Activated CD4-positive, alpha-beta memory T cell treated with anti-CD3 and anti-CD28 coated beads for 36 hours (primary cell): ENCODE measurements at regions of chr6 and their contacts with region 1.

Region 1: DNA sequence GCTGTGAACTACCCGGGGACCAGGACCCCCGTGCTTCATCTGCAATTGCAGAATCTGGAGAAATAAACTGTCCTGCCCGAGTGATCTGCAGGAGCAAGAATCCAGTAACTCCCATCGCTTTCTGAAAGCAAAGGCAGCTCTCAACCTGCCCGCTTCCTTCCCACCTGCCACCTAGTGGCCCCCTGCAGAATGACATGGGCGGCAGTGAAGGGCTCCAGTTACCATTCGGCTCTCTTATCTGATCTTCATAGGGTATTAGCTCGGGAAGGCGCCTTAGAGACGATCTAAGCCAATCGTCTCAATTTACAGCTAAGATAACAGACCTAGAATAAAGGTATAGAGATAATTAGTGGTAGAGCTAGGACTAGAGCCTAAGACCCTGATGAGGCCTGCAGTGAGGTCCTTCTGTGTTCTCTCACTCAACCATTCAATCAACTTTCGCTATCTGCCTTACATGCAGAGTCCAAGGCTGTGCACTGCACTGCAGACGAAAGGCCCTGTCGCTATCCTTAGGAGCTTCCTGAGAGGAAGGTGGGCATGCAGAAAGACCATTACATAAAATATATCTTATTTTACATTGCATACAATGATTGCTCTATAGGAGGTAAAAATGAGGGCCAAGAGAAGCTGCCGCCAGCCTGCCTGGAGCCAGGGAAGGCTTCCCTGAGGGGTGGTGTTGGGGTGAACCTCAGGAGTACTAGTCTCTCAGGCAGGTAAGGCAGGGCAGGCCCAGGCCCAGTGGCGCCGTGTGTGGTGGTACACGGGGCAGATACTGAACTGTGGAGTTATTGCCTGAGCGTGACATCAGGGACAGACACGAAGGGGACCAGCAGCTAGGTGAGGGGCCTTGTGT is 7.1 kb upstream of the PSMG4 start:
- DNase-seq: peak; percentile 87
- H3K4me3 Mint-ChIP-seq: no peak overlapping the region
- H3K27ac Mint-ChIP-seq: no peak overlapping the region
- H3K4me1 Mint-ChIP-seq: peaks cover 4% of the 10 kb centered on the region
- H3K27me3 Mint-ChIP-seq: peaks cover 24% of the 10 kb centered on the region

Region 2: GRCh38 chr6:3125815-3126214 is 125.9 kb before region 1 on chr6:
- CTCF ChIA-PET with region 1: interaction called, 122 read pairs
- POLR2A ChIA-PET with region 1: no interaction called
- intact Hi-C with region 1: loop called (anchors 1 kb)
- DNase-seq: no peak
- H3K4me3 Mint-ChIP-seq: no peak overlapping the region
- H3K27ac Mint-ChIP-seq: no peak overlapping the region
- H3K4me1 Mint-ChIP-seq: peaks cover 7% of the 10 kb centered on the region
- H3K27me3 Mint-ChIP-seq: no peaks in the 10 kb centered on the region

Region 3: GRCh38 chr6:3209114-3210023 is 42.3 kb before region 1 on chr6:
- CTCF ChIA-PET with region 1: interaction called, 13 read pairs
- POLR2A ChIA-PET with region 1: no interaction called
- intact Hi-C with region 1: loop called (anchors 2 kb)
- DNase-seq: peak; percentile 84
- H3K4me3 Mint-ChIP-seq: peak overlapping the region; percentile 51
- H3K27ac Mint-ChIP-seq: peak overlapping the region; percentile 89
- H3K4me1 Mint-ChIP-seq: peaks cover 30% of the 10 kb centered on the region
- H3K27me3 Mint-ChIP-seq: peaks cover 20% of the 10 kb centered on the region

Region 4: DNA sequence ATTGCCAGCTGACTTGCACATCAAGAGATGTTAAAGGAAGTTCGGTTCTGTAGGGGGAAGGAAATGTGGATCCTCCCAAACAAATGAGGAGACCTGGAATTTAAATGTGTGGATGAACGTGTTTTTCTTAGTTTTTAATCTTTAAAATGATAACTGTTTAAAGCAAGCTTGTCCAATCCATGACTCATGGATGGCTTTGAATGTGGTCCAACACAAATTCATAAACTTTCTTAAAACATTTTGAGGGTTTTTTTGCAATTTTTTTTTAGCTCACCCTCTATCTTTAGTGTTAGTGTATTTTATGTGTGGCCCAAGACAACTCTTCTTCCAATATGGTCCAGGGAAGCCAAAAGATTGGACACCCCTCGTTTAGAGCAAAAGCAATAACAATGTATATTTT is 36.8 kb before region 1 on chr6:
- CTCF ChIA-PET with region 1: interaction called, 13 read pairs
- POLR2A ChIA-PET with region 1: no interaction called
- intact Hi-C with region 1: no loop called
- DNase-seq: no peak
- H3K4me3 Mint-ChIP-seq: no peak overlapping the region
- H3K27ac Mint-ChIP-seq: no peak overlapping the region
- H3K4me1 Mint-ChIP-seq: peaks cover 5% of the 10 kb centered on the region
- H3K27me3 Mint-ChIP-seq: peaks cover 28% of the 10 kb centered on the region

Region 5: DNA sequence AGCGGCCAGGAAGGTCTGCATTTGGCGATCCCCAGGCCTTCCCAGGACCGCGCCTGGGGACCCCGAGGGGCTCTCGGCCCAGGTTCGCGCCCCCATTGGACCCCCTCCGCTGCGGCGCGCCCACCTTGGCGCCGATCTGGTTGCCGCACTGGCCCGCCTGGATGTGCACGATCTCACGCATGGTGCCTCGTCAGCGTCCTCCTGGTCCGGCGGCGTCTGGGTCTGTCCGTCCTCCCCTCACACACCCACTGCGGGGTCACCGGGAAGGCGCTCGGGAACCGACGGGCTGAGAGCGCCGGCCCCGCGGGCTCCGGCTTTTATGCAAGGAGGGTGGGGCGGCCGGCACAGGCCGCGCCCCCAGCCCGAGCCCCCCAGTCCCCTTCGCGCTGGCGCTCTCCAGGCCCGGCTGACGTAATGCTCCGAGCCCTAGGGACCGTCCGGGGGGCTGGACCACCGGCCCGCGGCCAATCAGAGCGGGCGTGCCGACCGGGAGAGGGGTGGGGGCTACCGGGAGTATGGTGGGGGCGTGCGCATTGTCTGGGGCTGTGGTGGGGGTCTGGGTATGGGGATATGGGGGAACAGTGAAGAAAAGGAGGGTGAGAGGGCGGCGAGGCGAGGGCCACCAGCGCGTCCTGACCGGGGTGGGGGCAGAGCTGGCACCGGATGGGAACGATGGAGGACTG is 24.2 kb before region 1 on chr6 and contains the start of gene TUBB2B:
- CTCF ChIA-PET with region 1: interaction called, 9 read pairs
- POLR2A ChIA-PET with region 1: no interaction called
- intact Hi-C with region 1: loop called (anchors 2 kb)
- DNase-seq: no peak
- H3K4me3 Mint-ChIP-seq: peak within 1 kb of the TSS; percentile 65
- H3K27ac Mint-ChIP-seq: no peak within 1 kb of the TSS
- H3K4me1 Mint-ChIP-seq: peaks cover 44% of the 10 kb centered on the region
- H3K27me3 Mint-ChIP-seq: peaks cover 64% of the 10 kb centered on the region
- total RNA-seq, gene TUBB2B: 0.29 TPM in 1 of 2 experiments, not detected in the other

Region 6: DNA sequence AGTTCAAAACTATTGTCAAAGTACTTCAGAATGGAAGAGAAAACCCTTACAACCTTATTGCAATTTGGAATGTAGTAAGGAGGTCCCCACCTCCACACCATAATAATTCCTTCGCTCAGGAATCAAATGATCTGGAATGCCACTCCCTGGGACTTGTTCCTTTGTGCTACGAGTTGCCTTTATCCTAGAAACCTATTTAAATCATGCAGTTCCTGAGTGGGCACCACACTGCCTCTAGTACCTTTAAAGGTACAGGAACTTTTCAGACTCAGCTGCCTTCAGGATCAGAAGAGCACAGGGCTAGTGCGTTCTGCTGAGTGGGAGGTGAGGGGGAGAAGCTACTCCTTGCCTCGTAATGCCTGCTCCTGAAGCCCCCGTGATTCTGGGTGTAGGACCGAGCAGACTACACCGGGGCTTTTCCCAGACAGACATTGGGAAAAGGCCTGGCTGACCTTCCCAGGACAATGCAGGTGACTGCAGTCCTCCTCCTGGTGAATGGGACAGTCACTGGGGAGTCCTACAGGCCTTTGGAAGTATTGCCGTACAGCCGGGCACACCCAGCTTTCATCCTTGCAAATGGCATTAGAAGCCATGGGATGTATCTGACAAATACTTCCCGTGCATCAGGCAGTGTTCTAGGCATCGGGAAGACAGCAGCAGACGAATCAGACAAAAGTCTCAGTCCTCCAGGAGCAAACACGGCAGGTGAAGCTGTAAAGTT is 12.4 kb before region 1 on chr6:
- CTCF ChIA-PET with region 1: interaction called, 17 read pairs
- POLR2A ChIA-PET with region 1: no interaction called
- intact Hi-C with region 1: no loop called
- DNase-seq: no peak
- H3K4me3 Mint-ChIP-seq: no peak overlapping the region
- H3K27ac Mint-ChIP-seq: no peak overlapping the region
- H3K4me1 Mint-ChIP-seq: no peaks in the 10 kb centered on the region
- H3K27me3 Mint-ChIP-seq: peaks cover 41% of the 10 kb centered on the region

Region 7: DNA sequence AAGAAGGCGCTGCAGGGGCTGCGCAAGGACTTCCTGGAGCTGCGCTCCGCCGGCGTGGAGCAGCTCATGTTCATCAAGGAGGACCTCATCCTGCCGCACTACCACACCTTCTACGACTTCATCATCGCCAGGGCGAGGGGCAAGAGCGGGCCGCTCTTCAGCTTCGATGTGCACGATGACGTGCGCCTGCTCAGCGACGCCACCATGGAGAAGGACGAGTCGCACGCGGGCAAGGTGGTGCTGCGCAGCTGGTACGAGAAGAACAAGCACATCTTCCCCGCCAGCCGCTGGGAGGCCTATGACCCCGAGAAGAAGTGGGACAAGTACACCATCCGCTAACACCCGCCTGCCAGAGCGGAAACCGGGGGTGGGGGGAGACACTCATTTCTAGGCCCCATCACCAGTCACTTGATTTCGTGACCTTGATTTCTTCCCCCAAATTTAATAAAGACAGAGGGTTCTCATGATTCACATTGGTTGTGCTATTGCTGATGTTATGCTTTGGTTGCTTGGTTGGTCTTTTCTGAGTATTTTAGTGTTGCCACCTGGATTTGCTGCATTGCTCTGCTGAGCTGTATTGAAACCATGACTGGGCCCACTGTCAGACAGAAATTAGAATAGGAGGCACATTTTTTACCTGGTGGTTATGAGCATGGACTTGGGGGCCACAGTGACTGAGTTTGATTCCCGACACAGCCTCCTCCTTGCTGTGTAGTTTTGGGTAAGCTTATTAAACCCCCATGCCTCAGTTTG is 598.9 kb after region 1 on chr6:
- CTCF ChIA-PET with region 1: no interaction called
- POLR2A ChIA-PET with region 1: no interaction called
- intact Hi-C with region 1: no loop called
- DNase-seq: peak; percentile 89
- H3K4me3 Mint-ChIP-seq: peak overlapping the region; percentile 61
- H3K27ac Mint-ChIP-seq: peak overlapping the region; percentile 91
- H3K4me1 Mint-ChIP-seq: peaks cover 40% of the 10 kb centered on the region
- H3K27me3 Mint-ChIP-seq: no peaks in the 10 kb centered on the region